ENCODE measurements at regions of chr11 and their contacts with region 1.

Region 1: GRCh38 chr11:95849087-95849825 is 59.0 kb downstream of the CEP57 start:
- DNase-seq: peak in 6 of 10 donors; percentile 18 to 88 (median 38)

Region 2: GRCh38 chr11:95790123-95790932 is 58.9 kb before region 1 on chr11 and contains the start of gene CEP57:
- intact Hi-C with region 1: no loop called
- DNase-seq: peak; percentile 83 to 98 (median 92)

Region 3: GRCh38 chr11:95923728-95924413 is 74.6 kb after region 1 on chr11 and contains the start of gene MTMR2:
- intact Hi-C with region 1: loop called (anchors 10 kb)
- DNase-seq: peak; percentile 75 to 97 (median 84)

Region 4: GRCh38 chr11:96037405-96037936 is 188.2 kb after region 1 on chr11:
- intact Hi-C with region 1: no loop called
- DNase-seq: no peak